Ovary (tissue), 10 donors: ENCODE measurements at regions of chr3 and their contacts with region 1.

Region 1: GRCh38 chr3:124995460-124995994 is 60.3 kb downstream of the HEG1 start:
- DNase-seq: peak; percentile 44 to 69 (median 62)
- H3K4me3 ChIP-seq: no peak overlapping the region
- H3K27ac ChIP-seq: no peak overlapping the region
- H3K4me1 ChIP-seq: no peaks in the 10 kb centered on the region
- H3K27me3 ChIP-seq: no peaks in the 10 kb centered on the region
- CTCF ChIP-seq: peak; percentile 56 to 75 (median 60)
- EP300 ChIP-seq: no peak
- POLR2A ChIP-seq: no peak

Region 2: GRCh38 chr3:124529826-124530571 is 465.5 kb before region 1 on chr3:
- intact Hi-C with region 1: no loop called
- DNase-seq: no peak
- H3K4me3 ChIP-seq: no peak overlapping the region
- H3K27ac ChIP-seq: no peak overlapping the region
- H3K4me1 ChIP-seq: no peaks in the 10 kb centered on the region
- H3K27me3 ChIP-seq: no peaks in the 10 kb centered on the region
- CTCF ChIP-seq: no peak
- EP300 ChIP-seq: no peak
- POLR2A ChIP-seq: no peak

Region 3: DNA sequence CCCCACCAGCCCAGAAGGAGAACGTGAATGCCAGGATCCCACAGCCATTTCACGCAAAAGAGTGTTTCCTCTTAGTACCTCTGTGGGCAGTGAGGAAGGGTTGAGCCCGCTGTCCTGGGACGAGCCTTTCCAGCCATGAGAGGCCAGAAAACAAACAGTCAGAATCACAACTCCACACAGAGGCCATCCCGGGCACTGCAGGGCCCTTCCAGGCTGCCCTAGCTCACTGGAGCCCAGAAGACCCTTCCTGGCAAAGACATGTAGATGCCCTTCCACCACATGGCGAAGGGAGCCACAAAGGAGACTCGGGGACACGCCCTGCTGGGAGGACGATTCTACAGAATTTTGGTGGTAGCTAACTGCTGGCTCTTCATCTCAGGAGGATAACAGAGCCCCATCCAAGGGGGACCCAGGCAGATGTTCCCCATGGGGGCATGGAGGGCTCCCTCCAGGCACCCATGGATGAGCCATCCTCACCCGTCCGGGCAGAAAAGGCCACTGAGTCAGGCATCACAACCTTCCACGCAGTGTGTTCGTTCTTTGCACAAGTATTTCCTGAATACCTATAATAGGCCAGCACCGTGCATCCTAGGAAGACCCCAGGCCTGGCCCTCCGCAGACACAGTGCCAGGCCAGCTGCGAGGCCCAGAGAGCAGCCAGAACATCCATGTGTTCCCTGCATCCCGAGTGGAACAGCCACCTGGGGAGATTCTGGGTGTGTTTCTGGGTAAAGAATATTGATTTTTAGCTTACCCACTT is 169.8 kb after region 1 on chr3:
- intact Hi-C with region 1: loop called in 1 of 4 experiments (anchors 5 kb)
- DNase-seq: peak in 2 of 5 donors; percentile 35 to 65
- H3K4me3 ChIP-seq: no peak overlapping the region
- H3K27ac ChIP-seq: no peak overlapping the region
- H3K4me1 ChIP-seq: no peaks in the 10 kb centered on the region
- H3K27me3 ChIP-seq: no peaks in the 10 kb centered on the region
- CTCF ChIP-seq: peak in 1 of 3 donors; percentile 28
- EP300 ChIP-seq: no peak
- POLR2A ChIP-seq: no peak

Region 4: DNA sequence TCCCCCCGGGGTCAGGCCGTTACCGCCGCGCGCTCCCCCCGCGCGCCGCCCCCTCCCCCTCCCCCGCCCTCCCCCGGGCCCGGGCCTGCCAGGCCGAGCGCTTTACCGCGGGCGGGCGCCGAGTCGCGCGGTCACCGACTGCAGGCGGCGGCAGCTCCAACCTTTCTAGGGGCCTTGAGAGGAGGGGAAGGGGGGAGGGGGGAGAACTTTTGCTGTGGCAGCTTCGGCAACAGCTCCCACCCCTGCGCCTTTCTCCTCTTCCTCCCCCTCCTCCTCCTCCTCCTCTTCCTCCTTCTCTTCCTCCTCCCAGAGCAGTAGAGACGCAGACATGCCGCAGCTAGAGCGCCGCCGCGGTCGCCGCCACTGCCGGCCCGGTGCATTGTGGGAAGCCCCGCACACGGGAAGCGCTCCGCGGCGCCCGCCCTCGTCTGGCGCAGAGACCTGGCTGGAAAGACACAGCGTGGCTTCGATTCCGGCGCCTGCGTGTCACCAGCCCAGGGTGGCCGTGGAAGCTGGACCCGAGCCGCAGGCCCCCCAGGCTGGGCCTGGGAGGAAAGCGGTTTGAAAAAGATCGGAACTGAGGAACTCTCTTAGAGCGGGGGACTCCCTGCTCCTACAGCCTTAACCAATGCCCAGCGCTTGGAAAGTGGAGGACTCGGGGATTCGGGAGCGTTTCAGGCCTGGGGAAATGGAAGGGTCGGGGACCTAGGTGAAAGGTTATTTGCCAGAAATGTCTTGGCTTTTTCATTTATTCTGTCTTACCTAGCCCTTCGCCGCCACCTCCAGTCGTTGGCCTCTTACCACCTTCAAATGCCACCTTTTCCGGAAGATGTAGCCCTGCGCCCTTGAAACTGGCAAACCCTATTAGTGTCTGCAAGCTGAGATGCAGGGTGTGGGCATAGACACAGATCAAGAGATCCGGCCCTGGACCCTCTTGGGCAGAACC is 379.7 kb after region 1 on chr3 and contains the start of gene ZNF148:
- intact Hi-C with region 1: loop called in 1 of 4 experiments (anchors 10 kb)
- DNase-seq: peak; percentile 85 to 93 (median 90)
- H3K4me3 ChIP-seq: peak within 1 kb of the TSS; percentile 55
- H3K27ac ChIP-seq: peak within 1 kb of the TSS; percentile 45 to 85
- H3K4me1 ChIP-seq: peaks cover 6% of the 10 kb centered on the region
- H3K27me3 ChIP-seq: no peaks in the 10 kb centered on the region
- CTCF ChIP-seq: no peak
- EP300 ChIP-seq: no peak
- POLR2A ChIP-seq: peak; percentile 71
- total RNA-seq, gene ZNF148: 22.2 to 98.8 (median 67.4) TPM

Region 5: DNA sequence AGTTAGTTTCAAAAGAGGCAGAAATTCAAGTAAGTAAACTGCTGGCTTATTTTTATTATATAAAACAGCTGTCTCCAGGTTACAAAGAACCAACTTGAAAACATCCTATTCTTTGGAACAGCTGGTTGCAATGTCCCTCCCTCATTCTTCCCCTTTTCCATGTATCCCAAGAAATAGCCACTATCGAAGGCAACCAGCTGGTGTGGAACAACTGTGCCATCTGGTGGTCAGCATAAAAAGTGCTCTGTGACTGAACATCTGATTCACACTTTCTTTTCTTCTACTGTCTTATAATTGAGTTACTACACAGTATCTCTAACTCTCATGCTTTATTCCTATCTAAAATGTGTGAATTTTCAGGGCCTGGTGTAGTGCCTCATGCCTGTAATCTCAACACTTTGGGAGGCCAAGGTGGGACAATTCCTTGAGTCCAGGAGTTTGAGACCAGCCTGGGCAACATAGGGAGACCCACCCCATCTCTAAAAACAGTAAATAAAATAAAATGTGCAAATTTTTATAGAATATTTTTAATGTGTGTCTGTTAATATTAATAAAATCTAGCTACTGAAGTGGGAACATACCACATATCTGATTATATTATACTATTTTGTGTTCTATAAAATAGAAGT is 590.2 kb after region 1 on chr3:
- intact Hi-C with region 1: loop called in 1 of 4 experiments (anchors 10 kb)
- DNase-seq: peak; percentile 46 to 72 (median 60)
- H3K4me3 ChIP-seq: no peak overlapping the region
- H3K27ac ChIP-seq: no peak overlapping the region
- H3K4me1 ChIP-seq: peaks cover 2% of the 10 kb centered on the region
- H3K27me3 ChIP-seq: no peaks in the 10 kb centered on the region
- CTCF ChIP-seq: peak; percentile 65 to 82 (median 78)
- EP300 ChIP-seq: no peak
- POLR2A ChIP-seq: no peak